Natural killer cell (primary cell): ENCODE measurements at regions of chr3 and their contacts with region 1.

Region 1: DNA sequence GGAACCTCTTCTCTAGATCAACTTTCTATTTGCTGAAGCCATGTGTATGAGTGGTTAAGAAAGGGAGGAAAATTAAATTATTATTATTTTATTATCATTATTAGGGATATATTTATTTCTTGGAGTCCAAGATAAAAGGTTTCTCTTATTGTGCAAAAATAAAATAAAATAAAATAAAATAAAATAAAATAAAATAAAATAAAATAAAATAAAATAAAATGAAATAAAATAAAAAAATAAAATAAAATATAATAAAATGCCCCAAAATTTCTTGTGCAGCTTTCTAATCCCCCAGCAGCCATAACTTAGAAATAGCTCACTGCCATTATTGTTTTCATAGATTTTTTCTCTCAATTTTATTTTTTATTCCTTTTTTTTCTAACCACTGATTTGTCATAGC is 526.8 kb downstream of the VGLL3 start:
- DNase-seq: no peak
- ATAC-seq: no peak
- H3K4me3 ChIP-seq: no peak overlapping the region
- H3K4me3 Mint-ChIP-seq: no peak overlapping the region
- H3K27ac ChIP-seq: no peak overlapping the region
- H3K27ac Mint-ChIP-seq: no peak overlapping the region
- H3K4me1 ChIP-seq: no peaks in the 10 kb centered on the region
- H3K4me1 Mint-ChIP-seq: no peaks in the 10 kb centered on the region
- H3K27me3 ChIP-seq: no peaks in the 10 kb centered on the region
- H3K27me3 Mint-ChIP-seq: no peaks in the 10 kb centered on the region
- CTCF ChIP-seq: no peak

Region 2: DNA sequence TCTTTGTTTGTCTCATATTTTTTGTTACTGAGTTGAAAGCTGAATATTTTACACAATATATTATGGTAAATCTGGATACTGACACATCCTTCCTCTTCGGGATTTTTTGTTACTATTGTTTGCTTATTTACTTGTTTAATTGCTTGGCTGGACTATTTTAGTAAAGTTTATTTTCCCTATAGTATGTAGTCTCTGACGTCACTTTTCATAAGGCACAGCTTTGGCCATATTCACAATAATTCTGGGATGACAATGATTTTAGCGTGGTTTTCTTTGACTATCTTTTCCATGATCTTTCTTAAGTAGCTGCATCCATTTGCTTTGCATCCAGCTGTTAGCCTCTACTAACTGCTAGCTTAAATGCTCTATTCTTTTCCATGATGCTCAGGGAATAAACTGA is 25.6 kb before region 1 on chr3:
- intact Hi-C with region 1: loop called (anchors 1 kb)
- DNase-seq: no peak
- ATAC-seq: no peak
- H3K4me3 ChIP-seq: no peak overlapping the region
- H3K4me3 Mint-ChIP-seq: no peak overlapping the region
- H3K27ac ChIP-seq: no peak overlapping the region
- H3K27ac Mint-ChIP-seq: no peak overlapping the region
- H3K4me1 ChIP-seq: no peaks in the 10 kb centered on the region
- H3K4me1 Mint-ChIP-seq: no peaks in the 10 kb centered on the region
- H3K27me3 ChIP-seq: no peaks in the 10 kb centered on the region
- H3K27me3 Mint-ChIP-seq: no peaks in the 10 kb centered on the region
- CTCF ChIP-seq: no peak

Region 3: DNA sequence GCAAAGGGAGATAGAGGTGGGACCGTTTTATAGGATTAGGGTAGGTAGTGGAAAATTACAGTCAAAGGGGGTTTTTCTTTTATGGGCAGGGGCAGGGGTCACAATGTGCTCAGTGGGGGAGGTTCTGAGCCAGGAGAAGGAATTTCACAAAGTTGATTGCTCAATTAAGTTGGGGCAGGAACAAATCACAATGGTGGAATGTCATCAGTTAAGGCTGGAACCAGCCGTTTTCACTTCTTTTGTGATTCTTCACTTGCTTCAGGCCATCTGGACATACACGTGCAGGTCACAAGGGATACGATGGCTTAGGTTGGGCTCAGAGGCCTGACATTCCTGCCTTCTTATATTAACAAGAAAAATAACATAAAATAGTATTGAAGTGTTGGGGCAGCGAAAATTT is 73.0 kb after region 1 on chr3:
- intact Hi-C with region 1: no loop called
- DNase-seq: no peak
- ATAC-seq: no peak
- H3K4me3 ChIP-seq: no peak overlapping the region
- H3K4me3 Mint-ChIP-seq: no peak overlapping the region
- H3K27ac ChIP-seq: no peak overlapping the region
- H3K27ac Mint-ChIP-seq: no peak overlapping the region
- H3K4me1 ChIP-seq: no peaks in the 10 kb centered on the region
- H3K4me1 Mint-ChIP-seq: no peaks in the 10 kb centered on the region
- H3K27me3 ChIP-seq: no peaks in the 10 kb centered on the region
- H3K27me3 Mint-ChIP-seq: no peaks in the 10 kb centered on the region
- CTCF ChIP-seq: no peak